B cell (primary cell): ENCODE measurements at regions of chr19 and their contacts with region 1.

Region 1: GRCh38 chr19:41837981-41838708 is 6.3 kb downstream of the LYPD4 start:
- DNase-seq: no peak
- ATAC-seq: no peak
- H3K4me3 ChIP-seq: no peak overlapping the region
- H3K4me3 Mint-ChIP-seq: no peak overlapping the region
- H3K27ac ChIP-seq: no peak overlapping the region
- H3K27ac Mint-ChIP-seq: no peak overlapping the region
- H3K4me1 ChIP-seq: no peaks in the 10 kb centered on the region
- H3K4me1 Mint-ChIP-seq: no peaks in the 10 kb centered on the region
- H3K27me3 ChIP-seq: peaks cover 0 to 30% (median 10%) of the 10 kb centered on the region in 4 experiments
- H3K27me3 Mint-ChIP-seq: peaks cover 33% of the 10 kb centered on the region
- CTCF ChIP-seq: no peak

Region 2: GRCh38 chr19:41853344-41854167 is 15.4 kb after region 1 on chr19:
- CTCF ChIA-PET with region 1: interaction called, 10 read pairs
- POLR2A ChIA-PET with region 1: no interaction called
- intact Hi-C with region 1: no loop called
- DNase-seq: no peak
- ATAC-seq: no peak
- H3K4me3 ChIP-seq: no peak overlapping the region
- H3K4me3 Mint-ChIP-seq: no peak overlapping the region
- H3K27ac ChIP-seq: no peak overlapping the region
- H3K27ac Mint-ChIP-seq: no peak overlapping the region
- H3K4me1 ChIP-seq: no peaks in the 10 kb centered on the region
- H3K4me1 Mint-ChIP-seq: no peaks in the 10 kb centered on the region
- H3K27me3 ChIP-seq: no peaks in the 10 kb centered on the region
- H3K27me3 Mint-ChIP-seq: peaks cover 4% of the 10 kb centered on the region
- CTCF ChIP-seq: no peak